Heart left ventricle (tissue), 16 donors: ENCODE measurements at regions of chr20 and their contacts with region 1.

Region 1: DNA sequence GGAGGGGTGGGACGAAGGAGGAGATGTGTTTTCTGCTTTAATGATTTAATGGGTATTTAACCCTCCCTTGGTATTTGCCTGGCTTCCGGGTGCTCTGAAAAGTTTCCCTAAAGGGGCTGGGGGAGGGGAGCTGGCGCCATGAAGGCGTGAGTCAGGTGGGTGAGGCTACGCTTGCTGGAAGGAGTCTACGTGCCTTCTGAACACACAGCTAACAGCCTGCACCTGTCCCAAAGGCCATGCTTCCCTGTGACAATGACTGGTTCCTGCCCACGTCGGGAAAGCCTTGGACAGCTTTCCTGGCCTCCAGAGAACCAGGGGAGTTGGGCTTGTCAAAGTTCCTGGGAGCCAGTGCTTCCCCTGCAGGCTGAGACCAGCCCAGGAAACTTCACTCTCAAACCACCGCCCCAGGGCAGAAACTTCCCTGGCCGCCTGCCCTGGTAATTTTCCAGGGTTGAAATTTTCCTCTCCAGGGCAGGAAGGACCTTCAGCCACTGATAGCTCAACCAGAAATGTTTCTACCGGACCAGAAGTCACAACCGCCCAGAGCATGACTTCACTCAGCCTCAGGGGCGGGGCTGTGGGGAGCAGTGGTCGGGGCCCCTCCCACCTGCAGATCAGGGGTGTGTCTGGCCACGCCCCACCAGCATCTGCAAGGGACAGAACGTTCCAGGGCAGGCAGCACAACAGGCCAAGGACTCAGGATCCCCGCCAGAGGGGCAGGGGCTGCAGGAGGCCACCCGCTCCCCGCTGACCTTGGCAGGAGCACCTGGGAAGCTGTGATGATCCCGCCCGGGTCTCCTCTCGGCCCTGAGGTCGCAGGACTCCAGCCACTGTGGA is 18.6 kb upstream of the SLCO4A1 start:
- DNase-seq: peak; percentile 91 to 96 (median 94)
- ATAC-seq: peak; percentile 92 to 96 (median 94)
- H3K4me3 ChIP-seq: peak overlapping the region in 5 of 12 donors; percentile 6 to 29 (median 10)
- H3K27ac ChIP-seq: peak overlapping the region; percentile 89 to 96 (median 92)
- H3K4me1 ChIP-seq: peaks cover 18 to 57% (median 30%) of the 10 kb centered on the region in 12 donors
- H3K27me3 ChIP-seq: no peaks in the 10 kb centered on the region
- CTCF ChIP-seq: peak in 2 of 12 donors; percentile 5 to 7
- POLR2A ChIP-seq: peak; percentile 13 to 84

Region 2: GRCh38 chr20:62476056-62476838 is 147.5 kb before region 1 on chr20:
- intact Hi-C with region 1: no loop called
- DNase-seq: peak in 4 of 5 donors; percentile 54 to 81 (median 61)
- ATAC-seq: peak in 3 of 4 donors; percentile 38 to 57 (median 57)
- H3K4me3 ChIP-seq: peak overlapping the region; percentile 22 to 63 (median 44)
- H3K27ac ChIP-seq: peak overlapping the region in 1 of 12 donors; percentile 48
- H3K4me1 ChIP-seq: peaks cover 0 to 20% (median 8%) of the 10 kb centered on the region in 12 donors
- H3K27me3 ChIP-seq: peaks cover 26 to 88% (median 54%) of the 10 kb centered on the region in 9 donors
- CTCF ChIP-seq: no peak
- POLR2A ChIP-seq: no peak

Region 3: DNA sequence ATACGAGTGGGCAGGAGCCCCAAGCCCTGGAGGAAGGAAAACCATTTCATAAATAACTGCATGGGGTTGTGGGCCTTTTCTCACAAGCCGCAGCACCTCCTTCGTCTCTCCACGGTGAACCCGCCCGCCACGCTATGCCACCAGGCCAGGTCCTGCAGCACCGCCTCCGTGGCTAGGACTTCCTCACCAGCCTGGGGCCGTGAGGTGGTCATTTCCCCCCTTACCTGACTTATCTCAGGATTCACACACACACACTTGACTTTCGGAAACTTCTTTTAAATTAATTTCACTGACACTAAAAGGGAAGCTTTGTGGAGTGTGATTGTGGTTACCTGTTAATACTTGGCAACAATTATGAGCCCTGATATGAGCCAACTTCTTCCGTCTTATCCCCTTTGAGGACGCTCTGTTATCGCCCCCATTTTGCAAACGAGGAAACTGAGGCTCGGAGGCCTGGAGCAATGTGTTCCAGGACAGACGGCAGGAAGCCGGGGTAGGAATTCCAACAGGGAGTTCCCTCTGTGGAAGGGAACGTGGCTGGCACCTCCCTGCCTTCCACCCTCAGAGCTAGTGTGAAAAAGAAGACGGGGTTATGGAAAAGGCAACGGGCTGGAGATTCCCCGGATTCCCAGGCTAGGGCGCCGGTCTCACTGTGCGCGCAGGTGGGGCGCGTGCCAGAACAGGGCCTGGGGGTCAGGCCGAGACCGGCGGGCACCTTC is 17.8 kb after region 1 on chr20:
- intact Hi-C with region 1: loop called in 1 of 10 experiments (anchors 2 kb)
- DNase-seq: no peak
- ATAC-seq: no peak
- H3K4me3 ChIP-seq: peak overlapping the region; percentile 49 to 82 (median 70)
- H3K27ac ChIP-seq: peak overlapping the region in 11 of 12 donors; percentile 36 to 82 (median 75)
- H3K4me1 ChIP-seq: peaks cover 0 to 57% (median 28%) of the 10 kb centered on the region in 12 donors
- H3K27me3 ChIP-seq: peaks cover 0 to 35% (median 10%) of the 10 kb centered on the region in 9 donors
- CTCF ChIP-seq: no peak
- POLR2A ChIP-seq: no peak

Region 4: DNA sequence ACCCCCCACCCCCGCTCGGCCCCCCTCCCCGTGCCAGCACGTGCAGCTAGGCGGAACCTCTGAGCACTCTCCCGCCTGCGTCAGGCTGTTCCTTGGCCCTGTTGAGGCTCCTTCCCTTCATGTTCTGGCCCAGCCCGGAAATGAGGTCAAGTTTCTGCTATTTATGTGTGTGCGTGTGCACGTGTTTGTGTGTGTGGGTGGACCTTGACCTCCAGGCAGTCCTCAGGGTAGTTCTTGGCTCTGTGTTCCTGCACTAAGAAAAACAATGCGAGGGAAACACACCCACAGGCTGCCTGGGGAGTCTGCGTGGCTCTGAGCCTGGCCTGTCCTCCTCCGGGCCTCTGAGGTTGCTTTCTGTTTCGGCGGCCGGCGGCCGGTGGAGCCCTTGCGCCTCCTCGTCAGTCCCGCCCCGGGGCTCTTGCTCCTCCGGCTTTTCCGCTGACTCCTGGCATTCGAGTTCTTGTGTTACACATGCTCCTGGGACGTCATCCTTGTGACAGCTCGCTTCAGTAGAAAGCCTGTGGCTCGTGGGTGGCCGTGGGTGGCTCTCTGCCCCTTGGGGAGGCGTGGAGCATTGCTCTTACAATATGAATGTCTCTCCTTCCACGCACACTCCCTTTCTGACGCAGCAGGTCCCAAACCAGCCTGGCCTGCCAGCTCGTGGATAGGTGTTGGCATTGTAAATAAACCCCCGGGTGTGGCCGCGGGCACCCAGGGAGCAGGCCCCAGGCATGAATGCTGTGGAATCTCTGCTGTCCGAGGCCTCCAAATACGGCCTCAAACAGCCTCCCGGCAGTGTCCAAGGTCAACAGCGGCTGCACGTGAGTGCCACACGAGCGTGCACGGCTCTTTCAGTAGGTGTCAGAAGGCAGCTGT is 28.6 kb after region 1 on chr20:
- intact Hi-C with region 1: loop called in 2 of 10 experiments (anchors 1 to 2 kb)
- DNase-seq: peak; percentile 93 to 96 (median 94)
- ATAC-seq: peak; percentile 89 to 96 (median 92)
- H3K4me3 ChIP-seq: peak overlapping the region in 9 of 12 donors; percentile 5 to 47 (median 31)
- H3K27ac ChIP-seq: peak overlapping the region; percentile 82 to 96 (median 93)
- H3K4me1 ChIP-seq: peaks cover 8 to 48% (median 33%) of the 10 kb centered on the region in 12 donors
- H3K27me3 ChIP-seq: no peaks in the 10 kb centered on the region
- CTCF ChIP-seq: peak in 1 of 12 donors; percentile 23
- POLR2A ChIP-seq: peak in 1 of 2 donors; percentile 51

Region 5: DNA sequence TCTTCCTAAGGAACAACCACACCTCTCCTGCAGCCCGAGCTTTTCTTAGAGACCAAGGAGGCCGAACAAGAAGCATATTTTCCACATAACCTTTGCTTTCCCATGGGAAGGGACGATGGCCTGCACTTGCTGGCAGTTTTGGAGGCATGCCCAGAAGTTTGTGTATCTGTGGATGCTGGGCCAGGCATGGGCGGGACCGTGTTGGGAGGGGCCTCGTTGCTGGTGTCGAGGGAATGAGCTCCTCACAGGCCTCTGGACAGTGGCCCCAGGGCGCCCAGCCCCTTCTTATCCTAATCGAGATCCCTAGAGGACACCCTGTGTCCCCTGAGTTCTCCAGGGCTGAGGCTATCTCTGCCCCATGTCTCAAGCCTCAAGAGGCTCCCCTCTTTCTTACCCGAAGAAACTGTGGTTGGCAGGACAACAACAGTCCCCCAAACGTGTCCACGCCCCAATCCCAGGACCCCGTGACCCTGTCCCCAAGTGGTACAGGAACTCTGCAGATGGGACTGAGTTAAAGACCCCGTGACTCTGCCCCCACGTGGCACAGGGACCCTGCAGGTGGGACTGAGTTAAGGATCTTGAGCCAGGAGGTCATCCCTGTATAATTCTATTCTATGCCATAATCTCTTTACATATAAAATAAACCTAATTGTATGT is 482.5 kb after region 1 on chr20:
- intact Hi-C with region 1: no loop called
- DNase-seq: peak in 4 of 5 donors; percentile 50 to 55 (median 54)
- ATAC-seq: peak; percentile 24 to 67 (median 58)
- H3K4me3 ChIP-seq: no peak overlapping the region
- H3K27ac ChIP-seq: peak overlapping the region in 1 of 12 donors; percentile 67
- H3K4me1 ChIP-seq: peaks cover 0 to 15% (median 1%) of the 10 kb centered on the region in 12 donors
- H3K27me3 ChIP-seq: peaks cover 0 to 13% (median 3%) of the 10 kb centered on the region in 9 donors
- CTCF ChIP-seq: no peak
- POLR2A ChIP-seq: no peak